ENCODE measurements at regions of chr16 and their contacts with region 1.

Region 1: DNA sequence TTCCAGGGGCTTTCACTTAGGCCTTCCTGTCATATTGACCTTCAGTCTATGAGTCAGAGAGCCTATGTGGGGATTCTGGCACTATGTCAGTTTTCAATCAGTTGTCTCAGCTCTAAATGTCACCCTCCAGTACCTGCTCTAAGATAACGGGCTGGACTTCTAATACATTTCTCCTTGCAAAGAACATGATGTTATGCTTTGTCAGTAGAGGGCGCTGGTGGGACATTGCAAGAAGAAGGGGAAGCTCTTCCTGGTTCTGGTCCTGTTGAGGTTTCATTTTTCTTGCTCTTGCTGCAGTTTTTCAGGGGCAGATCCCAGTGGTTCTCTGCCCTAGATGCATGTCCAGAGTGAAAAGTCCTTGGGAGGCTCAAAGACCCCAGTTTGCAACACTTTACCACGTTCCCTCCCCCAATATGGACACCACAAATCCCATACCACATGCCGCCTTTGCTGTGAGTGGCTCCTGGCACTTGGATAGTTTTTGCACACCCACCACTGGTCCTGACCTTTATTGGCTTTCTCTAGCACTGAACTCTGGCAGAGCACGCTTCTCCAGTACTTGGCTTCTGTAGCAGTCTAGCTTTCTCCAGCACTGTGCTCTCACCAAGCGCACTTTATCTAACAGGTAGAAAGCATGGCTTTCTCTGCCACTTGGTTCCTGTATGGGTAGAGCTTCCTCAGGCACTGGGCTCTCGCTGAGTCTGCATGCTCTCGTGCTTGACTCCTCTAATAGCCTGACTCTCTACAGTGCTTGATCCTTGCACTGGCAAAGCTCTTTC is 49.0 kb downstream of the BCL7C start:
- DNase-seq: peak; percentile 78
- ATAC-seq: peak; percentile 82
- H3K4me3 Mint-ChIP-seq: no peak overlapping the region
- H3K27ac Mint-ChIP-seq: no peak overlapping the region
- H3K4me1 Mint-ChIP-seq: peaks cover 4% of the 10 kb centered on the region
- H3K27me3 Mint-ChIP-seq: peaks cover 34% of the 10 kb centered on the region
- CTCF ChIP-seq: peak; percentile 56; the same call in 1 of the 2 replicates

Region 2: DNA sequence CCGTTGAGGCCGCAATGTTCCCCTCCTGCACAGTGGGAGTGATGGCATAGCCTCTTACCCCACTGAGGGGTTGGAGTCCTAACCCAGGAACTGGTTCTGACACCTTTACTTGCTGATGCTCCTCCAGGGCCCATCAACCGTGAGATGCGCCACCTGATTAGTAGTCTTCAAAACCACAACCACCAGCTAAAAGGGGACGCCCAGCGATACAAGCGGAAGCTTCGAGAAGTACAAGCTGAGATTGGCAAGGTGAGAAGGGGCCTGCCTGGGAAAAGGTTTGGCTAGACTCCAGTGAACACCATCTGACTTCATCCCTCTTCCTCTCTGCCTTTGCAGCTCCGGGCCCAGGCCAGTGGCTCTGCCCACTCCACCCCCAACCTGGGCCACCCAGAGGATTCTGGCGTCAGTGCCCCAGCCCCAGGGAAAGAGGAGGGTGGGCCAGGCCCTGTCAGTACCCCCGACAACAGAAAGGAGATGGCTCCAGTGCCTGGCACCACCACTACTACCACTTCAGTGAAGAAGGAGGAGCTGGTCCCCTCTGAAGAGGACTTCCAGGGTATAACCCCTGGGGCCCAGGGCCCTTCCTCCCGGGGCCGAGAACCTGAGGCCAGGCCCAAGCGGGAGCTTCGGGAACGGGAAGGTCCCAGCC is 77.0 kb before region 1 on chr16:
- CTCF ChIA-PET with region 1: no interaction called
- POLR2A ChIA-PET with region 1: no interaction called
- DNase-seq: no peak
- ATAC-seq: no peak
- H3K4me3 Mint-ChIP-seq: no peak overlapping the region
- H3K27ac Mint-ChIP-seq: no peak overlapping the region
- H3K4me1 Mint-ChIP-seq: peaks cover 8% of the 10 kb centered on the region
- H3K27me3 Mint-ChIP-seq: peaks cover 3% of the 10 kb centered on the region; the same call in 1 of the 2 replicates
- CTCF ChIP-seq: no peak

Region 3: DNA sequence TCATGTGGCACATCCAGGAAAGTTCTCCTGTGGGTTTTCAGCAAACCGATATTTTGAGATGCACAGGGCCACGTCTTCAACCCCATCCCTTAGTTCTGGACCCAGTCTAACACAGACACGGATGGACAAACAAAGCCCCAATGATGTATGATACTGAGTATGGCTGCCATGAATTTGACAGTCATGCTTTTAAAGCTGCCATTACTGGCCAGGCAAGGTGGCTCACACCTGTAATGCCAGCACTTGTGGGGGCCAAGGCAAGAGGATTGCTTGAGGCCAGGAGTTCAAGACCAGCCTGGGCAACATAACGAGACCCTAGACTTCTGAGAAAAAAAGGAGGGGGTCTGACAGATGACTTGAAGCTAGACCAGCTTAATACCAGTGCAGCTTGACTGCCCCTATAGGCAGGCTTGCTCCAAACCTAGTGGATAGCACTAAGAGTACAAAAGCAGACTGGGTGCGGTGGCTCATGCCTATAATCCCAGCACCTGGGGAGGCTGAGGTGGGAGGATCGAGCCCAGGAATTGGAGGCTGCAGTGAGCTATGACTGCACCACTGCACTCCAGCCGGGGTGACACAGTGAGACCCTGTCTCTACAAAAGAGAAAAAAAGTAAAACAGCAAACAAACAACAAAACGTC is 47.1 kb before region 1 on chr16:
- CTCF ChIA-PET with region 1: interaction called, 10 read pairs
- POLR2A ChIA-PET with region 1: no interaction called
- DNase-seq: no peak
- ATAC-seq: peak; percentile 90
- H3K4me3 Mint-ChIP-seq: no peak overlapping the region
- H3K27ac Mint-ChIP-seq: no peak overlapping the region
- H3K4me1 Mint-ChIP-seq: 0 out of 2 replicates have a peak, but pooled peaks cover 4% of the 10 kb centered on the region
- H3K27me3 Mint-ChIP-seq: peaks cover 39% of the 10 kb centered on the region
- CTCF ChIP-seq: no peak

Region 4: DNA sequence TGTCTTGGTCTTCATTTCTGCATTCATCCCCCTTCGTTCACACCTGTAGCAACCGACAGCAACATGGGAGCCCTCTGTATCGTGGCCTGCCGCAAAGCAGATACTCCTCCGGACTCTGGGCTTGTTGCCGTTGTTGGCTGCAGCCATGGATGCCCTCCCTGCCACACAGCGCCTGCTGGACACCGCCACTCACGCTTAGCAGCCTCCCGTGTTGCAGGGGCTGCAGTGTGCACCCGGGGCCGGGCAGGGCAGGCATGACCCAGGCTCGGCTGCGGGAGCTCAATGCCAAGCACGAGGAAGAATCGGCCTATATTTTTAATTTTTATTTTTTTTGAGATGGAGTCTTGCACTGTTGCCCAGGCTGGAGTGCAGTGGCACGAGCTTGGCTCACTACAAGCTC is 23.0 kb before region 1 on chr16:
- CTCF ChIA-PET with region 1: interaction called, 14 read pairs
- POLR2A ChIA-PET with region 1: no interaction called
- DNase-seq: no peak
- ATAC-seq: no peak
- H3K4me3 Mint-ChIP-seq: no peak overlapping the region
- H3K27ac Mint-ChIP-seq: no peak overlapping the region
- H3K4me1 Mint-ChIP-seq: no peaks in the 10 kb centered on the region
- H3K27me3 Mint-ChIP-seq: peaks cover 6% of the 10 kb centered on the region
- CTCF ChIP-seq: no peak

Region 5: GRCh38 chr16:30874821-30875717 is 30.2 kb after region 1 on chr16:
- CTCF ChIA-PET with region 1: interaction called, 43 read pairs
- POLR2A ChIA-PET with region 1: no interaction called
- DNase-seq: peak; percentile 91
- ATAC-seq: peak; percentile 91
- H3K4me3 Mint-ChIP-seq: peak overlapping the region; percentile 96
- H3K27ac Mint-ChIP-seq: peak overlapping the region; percentile 97
- H3K4me1 Mint-ChIP-seq: peaks cover 12% of the 10 kb centered on the region
- H3K27me3 Mint-ChIP-seq: peaks cover 40% of the 10 kb centered on the region
- CTCF ChIP-seq: no peak

Region 6: GRCh38 chr16:30912794-30913412 is 68.0 kb after region 1 on chr16:
- CTCF ChIA-PET with region 1: interaction called, 19 read pairs
- POLR2A ChIA-PET with region 1: no interaction called
- DNase-seq: no peak
- ATAC-seq: no peak
- H3K4me3 Mint-ChIP-seq: no peak overlapping the region
- H3K27ac Mint-ChIP-seq: no peak overlapping the region
- H3K4me1 Mint-ChIP-seq: peaks cover 10% of the 10 kb centered on the region
- H3K27me3 Mint-ChIP-seq: no peaks in the 10 kb centered on the region; the same call in 1 of the 2 replicates
- CTCF ChIP-seq: no peak